Activated T-helper 1 cell treated with anti-CD3 and anti-CD28 coated beads, Interleukin-12 subunit alpha, Interleukin-12 subunit beta, Interleukin-2, Interleukin-4 antibody, amounts not matched to agents 30 ng/mL and 10 ng/mL and 1 ng/mL, durations not matched to agents 14 hours and 24 hours and 36 hours (primary cell): ENCODE measurements at regions of chr12 and their contacts with region 1.

Region 1: GRCh38 chr12:84874125-84874824 is 38.3 kb downstream of the SLC6A15 start:
- DNase-seq: no peak
- H3K4me3 Mint-ChIP-seq: no peak overlapping the region
- H3K27ac Mint-ChIP-seq: no peak overlapping the region
- H3K4me1 Mint-ChIP-seq: no peaks in the 10 kb centered on the region
- H3K27me3 Mint-ChIP-seq: no peaks in the 10 kb centered on the region

Region 2: DNA sequence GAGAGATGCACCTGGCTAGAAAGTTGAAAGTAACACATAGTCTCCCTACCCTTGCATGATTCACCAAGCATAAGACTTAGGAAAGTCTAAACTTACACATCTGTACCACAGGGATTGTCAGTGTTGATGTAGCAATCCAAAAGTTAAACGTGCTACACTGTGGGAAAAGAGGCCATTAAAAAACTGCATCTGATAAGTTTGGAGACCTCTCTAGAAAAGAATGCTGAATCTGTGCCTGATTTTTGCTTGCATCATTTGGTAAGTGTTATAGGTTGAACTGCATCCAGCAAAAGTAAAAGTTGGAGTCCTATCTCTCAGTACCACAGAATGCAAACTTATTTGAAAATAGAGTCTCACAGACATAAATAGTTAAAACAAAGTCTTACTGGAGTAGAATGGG is 88.3 kb before region 1 on chr12:
- intact Hi-C with region 1: no loop called
- DNase-seq: no peak
- H3K4me3 Mint-ChIP-seq: no peak overlapping the region
- H3K27ac Mint-ChIP-seq: no peak overlapping the region
- H3K4me1 Mint-ChIP-seq: no peaks in the 10 kb centered on the region
- H3K27me3 Mint-ChIP-seq: no peaks in the 10 kb centered on the region

Region 3: DNA sequence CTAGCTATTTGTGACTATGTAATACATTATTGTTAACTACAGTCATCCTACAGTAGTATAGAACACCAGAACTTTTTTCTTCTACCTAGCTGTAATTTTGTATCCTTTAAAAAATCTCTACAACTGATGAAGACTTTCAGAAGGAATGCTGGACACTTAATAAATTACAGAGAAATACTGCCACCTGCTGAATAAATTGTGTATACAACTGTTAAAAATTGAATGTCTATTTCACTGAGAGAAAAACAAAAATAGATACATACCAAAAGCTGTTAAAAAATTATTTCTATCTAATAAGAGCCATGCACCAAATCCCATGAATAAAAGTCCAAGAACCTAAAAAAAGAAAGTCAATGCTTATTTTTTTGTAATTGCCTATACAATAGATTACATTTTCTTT is 155.2 kb after region 1 on chr12:
- intact Hi-C with region 1: loop called (anchors 1 kb)
- DNase-seq: no peak
- H3K4me3 Mint-ChIP-seq: no peak overlapping the region
- H3K27ac Mint-ChIP-seq: no peak overlapping the region
- H3K4me1 Mint-ChIP-seq: no peaks in the 10 kb centered on the region
- H3K27me3 Mint-ChIP-seq: peaks cover 1% of the 10 kb centered on the region

Region 4: DNA sequence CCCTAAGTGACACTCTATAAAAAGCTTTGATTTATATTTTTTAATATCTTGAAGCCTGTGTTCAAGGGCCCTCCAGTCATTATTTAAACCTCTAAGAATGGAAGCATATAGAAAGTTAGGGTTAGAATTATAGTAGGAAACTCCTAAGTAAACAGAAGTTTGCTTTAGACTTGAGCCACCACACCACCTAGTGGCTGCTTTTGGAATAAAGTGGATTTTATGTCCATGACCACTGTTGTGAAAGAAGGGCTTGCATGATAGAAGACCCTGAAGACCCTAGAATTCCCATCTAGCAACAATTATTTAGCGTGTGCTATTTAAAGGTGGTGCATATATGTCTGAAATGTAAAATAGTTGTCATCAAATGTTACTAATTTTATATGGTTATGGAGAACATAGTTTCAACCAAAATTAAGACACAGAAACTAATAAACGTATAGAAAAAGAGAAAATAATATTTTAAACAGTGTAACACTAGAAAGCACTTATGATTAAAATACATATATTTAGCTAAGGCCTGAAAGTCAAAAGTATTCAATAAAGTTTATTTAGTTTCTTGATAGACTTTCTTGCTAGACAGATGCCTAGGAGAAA is 183.2 kb after region 1 on chr12:
- intact Hi-C with region 1: loop called (anchors 1 kb)
- DNase-seq: no peak
- H3K4me3 Mint-ChIP-seq: no peak overlapping the region
- H3K27ac Mint-ChIP-seq: no peak overlapping the region
- H3K4me1 Mint-ChIP-seq: no peaks in the 10 kb centered on the region
- H3K27me3 Mint-ChIP-seq: no peaks in the 10 kb centered on the region

Region 5: DNA sequence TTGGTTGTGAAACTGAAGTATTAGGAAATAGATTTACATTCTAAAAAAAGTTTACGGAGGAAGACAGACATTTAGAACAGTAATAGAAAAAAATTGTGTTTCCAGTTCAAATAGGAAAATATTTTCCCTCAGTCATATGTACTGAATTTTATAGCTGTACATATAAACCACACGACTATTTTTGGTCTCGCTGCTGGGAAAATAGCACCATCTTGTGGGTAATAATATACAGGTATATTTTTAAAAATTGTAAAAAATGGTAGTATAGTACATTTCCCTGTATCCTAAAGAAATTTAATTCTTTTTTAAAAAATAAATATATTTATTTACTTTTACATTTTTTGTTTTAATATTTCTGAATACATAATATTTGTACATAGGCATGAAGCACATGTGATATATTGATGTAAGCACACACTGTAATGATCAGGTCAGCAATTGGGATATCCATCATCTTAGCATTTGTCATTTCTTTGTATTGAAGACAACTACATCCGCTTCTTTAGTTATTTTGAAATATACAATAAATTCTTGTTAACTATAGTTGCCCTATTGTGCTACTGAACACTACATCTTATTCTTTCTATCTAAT is 574.4 kb after region 1 on chr12:
- intact Hi-C with region 1: loop called (anchors 5 kb)
- DNase-seq: no peak
- H3K4me3 Mint-ChIP-seq: no peak overlapping the region
- H3K27ac Mint-ChIP-seq: no peak overlapping the region
- H3K4me1 Mint-ChIP-seq: no peaks in the 10 kb centered on the region
- H3K27me3 Mint-ChIP-seq: no peaks in the 10 kb centered on the region